Cardiac septum (tissue), 1 donor: ENCODE measurements at regions of chr5 and their contacts with region 1.

Region 1: DNA sequence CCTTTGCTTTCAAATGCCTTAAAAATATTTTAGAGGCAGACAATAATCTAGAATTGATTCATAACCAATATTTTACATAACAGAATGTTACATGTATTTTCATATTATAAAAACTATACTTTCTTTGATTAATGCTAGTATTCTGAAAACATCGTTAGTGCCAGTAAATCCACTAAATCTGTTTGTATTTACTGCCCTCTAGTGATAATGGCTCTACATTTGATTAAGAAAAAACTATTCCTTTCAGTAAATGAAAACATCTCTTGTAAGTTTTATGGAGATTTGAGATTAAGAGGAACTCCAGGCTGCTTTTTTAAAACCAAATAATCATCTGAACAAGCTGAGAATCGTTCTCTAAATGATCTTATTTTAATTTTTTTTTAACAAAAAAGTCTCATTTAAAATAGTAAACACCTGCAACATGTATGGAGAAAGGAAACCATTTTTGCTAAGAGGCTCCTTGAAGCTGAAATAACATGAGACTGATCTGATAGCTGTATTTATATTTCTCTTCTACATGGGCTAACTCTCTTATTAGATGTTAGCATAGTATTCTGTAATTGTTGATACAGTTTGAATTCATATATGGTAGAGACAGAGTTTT is 424.7 kb downstream of the RAB3C start:
- DNase-seq: no peak

Region 2: DNA sequence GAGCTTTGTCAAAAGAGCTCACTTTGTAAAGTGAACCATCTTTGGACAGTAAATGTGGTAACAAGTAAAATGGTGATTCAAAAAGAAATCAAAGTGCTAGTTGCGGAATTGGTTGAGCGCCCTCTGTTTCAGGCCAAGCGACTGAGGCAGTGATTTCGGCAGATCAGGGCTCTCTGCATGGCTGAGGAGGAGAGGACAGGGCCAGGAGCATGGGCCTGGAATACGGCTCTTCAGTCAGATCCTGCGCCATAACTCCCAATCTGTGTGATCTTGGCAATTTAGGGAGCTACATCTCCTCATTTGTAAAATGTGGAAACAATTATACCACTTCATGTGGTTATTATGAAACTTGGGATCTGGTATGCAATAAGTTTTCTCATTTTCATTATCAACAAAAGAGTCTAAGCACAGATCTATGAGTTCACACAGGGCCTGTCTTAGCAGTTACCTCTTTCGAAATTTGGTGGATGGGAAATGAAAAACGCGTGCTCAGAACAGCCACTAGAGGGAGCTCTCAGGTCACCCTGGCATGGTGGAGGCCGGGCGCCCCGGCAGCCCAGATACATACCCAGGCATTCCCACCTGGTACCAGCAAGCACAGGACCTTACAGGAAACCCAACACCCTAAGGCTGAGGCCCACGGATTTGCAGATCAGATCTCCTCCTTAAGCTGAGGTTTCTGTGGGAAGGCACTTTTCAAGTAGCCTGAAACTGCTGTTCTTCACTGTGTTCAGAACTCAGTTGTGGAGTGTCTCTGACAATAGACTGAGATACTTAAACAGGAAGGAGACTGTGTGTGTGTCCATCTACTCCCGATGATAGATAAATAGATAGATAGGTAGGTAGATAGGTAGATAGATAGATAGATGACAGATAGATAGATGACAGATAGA is 121.0 kb before region 1 on chr5:
- intact Hi-C with region 1: loop called (anchors 2 kb)
- DNase-seq: peak; percentile 79

Region 3: GRCh38 chr5:58891971-58892343 is 115.6 kb before region 1 on chr5:
- intact Hi-C with region 1: loop called (anchors 2 kb)
- DNase-seq: no peak